ENCODE measurements at regions of chr17 and their contacts with region 1.

Region 1: GRCh38 chr17:45385331-45385997 is 47.2 kb downstream of the ARHGAP27 start:
- DNase-seq: peak; percentile 80 to 86 (median 82)
- H3K4me3 ChIP-seq: no peak overlapping the region
- H3K4me3 Mint-ChIP-seq: peak overlapping the region in 1 of 8 donors; percentile 11
- H3K27ac ChIP-seq: no peak overlapping the region
- H3K27ac Mint-ChIP-seq: peak overlapping the region in 3 of 7 donors; percentile 32 to 68 (median 50)
- H3K4me1 ChIP-seq: peaks cover 4% of the 10 kb centered on the region
- H3K4me1 Mint-ChIP-seq: peaks cover 0 to 6% (median 4%) of the 10 kb centered on the region in 4 donors
- H3K27me3 ChIP-seq: no peaks in the 10 kb centered on the region
- H3K27me3 Mint-ChIP-seq: peaks cover 5 to 9% of the 10 kb centered on the region in 2 donors

Region 2: DNA sequence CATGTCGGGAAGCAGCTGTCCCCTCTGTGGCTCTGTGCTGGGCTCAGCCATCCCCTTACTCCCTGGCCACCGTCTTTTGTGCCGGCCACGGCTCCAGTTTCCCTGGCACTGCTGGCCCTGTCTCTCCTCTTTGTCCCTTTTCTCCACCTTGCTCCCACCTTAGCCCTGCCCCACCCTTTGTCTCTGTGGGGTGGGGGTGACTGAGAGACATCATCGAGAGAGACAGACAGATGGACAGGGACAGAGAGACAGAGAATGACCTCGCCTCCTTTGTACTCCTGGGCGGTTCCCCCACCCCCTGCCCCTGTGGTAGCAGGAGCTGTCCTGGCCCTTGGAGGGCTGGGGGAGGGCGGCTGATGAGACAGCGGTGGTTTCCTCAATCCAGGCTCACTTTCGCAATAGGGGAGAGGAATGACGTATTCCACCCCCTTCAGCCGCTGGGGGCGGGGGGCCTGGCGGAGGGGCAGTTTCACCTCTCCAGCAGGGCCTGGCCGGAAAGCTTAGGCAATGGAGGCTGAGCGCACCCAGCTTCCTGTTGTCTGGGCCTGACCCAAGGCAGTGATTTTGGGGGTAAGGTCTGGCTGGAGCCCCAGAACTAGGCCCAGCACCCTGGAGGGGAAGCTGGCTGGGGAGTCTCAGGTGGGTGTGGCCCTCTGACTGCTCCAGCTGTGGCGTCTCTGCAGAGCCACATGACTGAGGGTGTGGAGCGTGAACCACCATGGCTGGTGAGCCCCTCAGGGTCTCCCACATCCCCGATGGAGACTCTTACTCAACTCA is 156.5 kb before region 1 on chr17:
- CTCF ChIA-PET with region 1: interaction called, 11 read pairs
- POLR2A ChIA-PET with region 1: interaction called, 5 read pairs
- intact Hi-C with region 1: no loop called
- DNase-seq: peak; percentile 78 to 97 (median 84)
- H3K4me3 ChIP-seq: peak overlapping the region; percentile 43 to 74
- H3K4me3 Mint-ChIP-seq: peak overlapping the region; percentile 96 to 100 (median 99)
- H3K27ac ChIP-seq: peak overlapping the region; percentile 97
- H3K27ac Mint-ChIP-seq: peak overlapping the region; percentile 99 to 100 (median 100)
- H3K4me1 ChIP-seq: peaks cover 95% of the 10 kb centered on the region
- H3K4me1 Mint-ChIP-seq: peaks cover 48 to 99% (median 69%) of the 10 kb centered on the region in 4 donors
- H3K27me3 ChIP-seq: no peaks in the 10 kb centered on the region
- H3K27me3 Mint-ChIP-seq: no peaks in the 10 kb centered on the region

Region 3: DNA sequence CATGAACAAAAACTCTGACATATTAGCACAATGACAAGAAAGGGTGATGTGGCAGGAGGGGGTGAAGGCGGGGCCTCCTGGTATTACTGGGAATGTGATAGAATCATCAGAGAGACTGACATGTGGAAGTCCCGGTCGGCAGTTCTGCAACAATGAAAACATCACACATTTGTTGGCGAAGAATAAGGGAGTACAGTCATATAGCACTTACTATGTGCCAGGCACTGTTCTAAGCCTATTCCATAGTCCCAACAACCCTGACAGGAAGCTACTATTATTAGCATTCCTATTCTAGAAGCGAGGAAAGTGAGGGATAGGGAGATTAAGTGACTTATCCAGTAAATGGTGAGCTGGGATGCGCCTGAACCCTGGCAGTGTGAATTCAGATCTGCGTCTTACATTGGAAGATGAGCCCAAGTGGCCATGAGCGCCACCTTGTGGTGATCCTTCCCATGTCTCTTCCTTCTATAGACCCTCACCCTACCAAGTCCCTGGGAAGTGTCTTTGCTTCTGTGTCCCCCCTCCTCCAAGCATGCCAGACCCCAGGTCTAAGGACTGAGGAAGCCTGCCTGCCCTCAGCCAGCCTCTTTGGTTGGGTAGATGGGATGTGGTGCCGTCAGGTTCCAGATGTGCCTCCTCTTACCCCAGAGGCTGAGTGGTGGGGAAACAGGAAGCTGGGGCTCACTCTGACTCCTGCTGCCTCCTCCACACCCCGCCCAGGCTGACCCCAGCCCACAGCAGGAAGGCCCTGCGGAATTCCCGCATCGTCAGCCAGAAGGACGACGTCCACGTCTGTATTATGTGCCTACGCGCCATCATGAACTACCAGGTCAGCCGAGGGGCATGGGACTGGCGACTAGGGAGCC is 149.8 kb before region 1 on chr17:
- CTCF ChIA-PET with region 1: interaction called, 15 read pairs
- POLR2A ChIA-PET with region 1: interaction called, 3 read pairs
- intact Hi-C with region 1: loop called (anchors 1 kb)
- DNase-seq: peak; percentile 72 to 78 (median 73)
- H3K4me3 ChIP-seq: no peak overlapping the region
- H3K4me3 Mint-ChIP-seq: peak overlapping the region in 3 of 8 donors; percentile 17 to 63 (median 29)
- H3K27ac ChIP-seq: peak overlapping the region; percentile 57
- H3K27ac Mint-ChIP-seq: peak overlapping the region; percentile 88 to 99 (median 93)
- H3K4me1 ChIP-seq: peaks cover 54% of the 10 kb centered on the region
- H3K4me1 Mint-ChIP-seq: peaks cover 38 to 70% (median 53%) of the 10 kb centered on the region in 4 donors
- H3K27me3 ChIP-seq: no peaks in the 10 kb centered on the region
- H3K27me3 Mint-ChIP-seq: no peaks in the 10 kb centered on the region

Region 4: DNA sequence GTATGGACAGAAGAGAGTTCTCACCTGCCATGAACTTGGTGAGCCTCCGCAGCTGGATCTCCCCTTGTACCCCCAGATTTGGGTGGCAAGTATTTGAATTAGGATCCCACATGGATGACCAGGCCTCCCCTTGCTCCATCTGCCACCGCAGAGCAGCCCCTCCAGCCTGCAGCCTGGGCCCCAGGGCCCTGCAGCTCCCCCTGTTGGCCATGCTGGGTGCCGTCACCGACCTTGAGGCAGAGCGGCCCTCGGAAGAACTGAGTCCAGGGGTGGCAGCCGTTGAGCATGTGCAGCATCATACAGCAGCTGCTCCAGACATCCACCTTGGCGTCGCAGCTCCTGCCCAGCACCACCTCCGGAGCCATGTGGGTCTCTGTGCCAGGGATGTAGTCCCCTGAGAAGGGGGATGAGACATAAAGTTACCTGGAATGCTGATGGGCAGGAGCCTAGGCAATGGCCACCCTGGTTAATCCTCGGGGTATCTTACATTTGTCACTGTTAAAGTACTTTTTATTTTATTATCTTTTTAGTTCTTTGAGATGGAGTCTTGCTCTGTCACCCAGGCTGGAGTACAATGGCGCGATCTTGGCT is 114.5 kb before region 1 on chr17:
- CTCF ChIA-PET with region 1: interaction called, 215 read pairs
- POLR2A ChIA-PET with region 1: interaction called, 3 read pairs
- intact Hi-C with region 1: no loop called
- DNase-seq: peak; percentile 38 to 60 (median 41)
- H3K4me3 ChIP-seq: no peak overlapping the region
- H3K4me3 Mint-ChIP-seq: no peak overlapping the region
- H3K27ac ChIP-seq: no peak overlapping the region
- H3K27ac Mint-ChIP-seq: peak overlapping the region in 4 of 7 donors; percentile 22 to 31 (median 26)
- H3K4me1 ChIP-seq: no peaks in the 10 kb centered on the region
- H3K4me1 Mint-ChIP-seq: no peaks in the 10 kb centered on the region
- H3K27me3 ChIP-seq: no peaks in the 10 kb centered on the region
- H3K27me3 Mint-ChIP-seq: no peaks in the 10 kb centered on the region

Region 5: GRCh38 chr17:45284176-45285140 is 101.0 kb before region 1 on chr17:
- CTCF ChIA-PET with region 1: interaction called, 14 read pairs
- POLR2A ChIA-PET with region 1: no interaction called
- intact Hi-C with region 1: no loop called
- DNase-seq: peak in 1 of 5 donors; percentile 15
- H3K4me3 ChIP-seq: no peak overlapping the region
- H3K4me3 Mint-ChIP-seq: no peak overlapping the region
- H3K27ac ChIP-seq: no peak overlapping the region
- H3K27ac Mint-ChIP-seq: peak overlapping the region in 5 of 7 donors; percentile 68 to 78 (median 75)
- H3K4me1 ChIP-seq: no peaks in the 10 kb centered on the region
- H3K4me1 Mint-ChIP-seq: peaks cover 0 to 2% (median 1%) of the 10 kb centered on the region in 4 donors
- H3K27me3 ChIP-seq: no peaks in the 10 kb centered on the region
- H3K27me3 Mint-ChIP-seq: no peaks in the 10 kb centered on the region

Region 6: GRCh38 chr17:45307290-45308015 is 78.0 kb before region 1 on chr17:
- CTCF ChIA-PET with region 1: interaction called, 18 read pairs
- POLR2A ChIA-PET with region 1: interaction called, 3 read pairs
- intact Hi-C with region 1: no loop called
- DNase-seq: peak in 3 of 5 donors; percentile 29 to 69 (median 35)
- H3K4me3 ChIP-seq: no peak overlapping the region
- H3K4me3 Mint-ChIP-seq: peak overlapping the region in 7 of 8 donors; percentile 21 to 68 (median 57)
- H3K27ac ChIP-seq: peak overlapping the region; percentile 43
- H3K27ac Mint-ChIP-seq: peak overlapping the region; percentile 66 to 91 (median 86)
- H3K4me1 ChIP-seq: peaks cover 94% of the 10 kb centered on the region
- H3K4me1 Mint-ChIP-seq: peaks cover 58 to 91% (median 73%) of the 10 kb centered on the region in 4 donors
- H3K27me3 ChIP-seq: no peaks in the 10 kb centered on the region
- H3K27me3 Mint-ChIP-seq: no peaks in the 10 kb centered on the region

Measured in CD4-positive, alpha-beta memory T cell (primary cell).